ENCODE measurements at regions of chr10 and their contacts with region 1.

Region 1: GRCh38 chr10:102835007-102835482 is 2.2 kb downstream of the CYP17A1 start:
- DNase-seq: peak; percentile 56 to 84
- ATAC-seq: peak; percentile 89

Region 2: DNA sequence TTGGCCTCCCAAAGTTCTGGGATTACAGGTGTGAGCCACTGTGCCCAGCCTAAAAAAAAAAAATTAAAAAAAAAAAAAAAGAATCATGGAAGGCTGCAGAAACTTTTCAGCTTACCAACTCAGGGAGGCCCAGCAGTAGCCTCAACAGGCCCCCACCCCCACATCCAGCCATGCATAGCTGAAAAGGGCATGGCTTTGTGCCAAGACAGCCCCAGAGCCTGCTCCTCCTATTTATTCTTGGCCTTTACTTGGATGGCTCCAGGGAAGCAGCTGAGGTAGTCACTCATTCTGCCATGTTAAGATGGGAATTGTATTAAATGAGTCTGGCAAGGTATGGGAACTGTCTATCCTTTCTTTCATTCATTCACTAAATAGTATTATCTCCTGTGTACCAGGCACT is 69.3 kb after region 1 on chr10:
- intact Hi-C with region 1: loop called in 1 of 2 experiments (anchors 5 kb)
- DNase-seq: no peak
- ATAC-seq: no peak

Region 3: DNA sequence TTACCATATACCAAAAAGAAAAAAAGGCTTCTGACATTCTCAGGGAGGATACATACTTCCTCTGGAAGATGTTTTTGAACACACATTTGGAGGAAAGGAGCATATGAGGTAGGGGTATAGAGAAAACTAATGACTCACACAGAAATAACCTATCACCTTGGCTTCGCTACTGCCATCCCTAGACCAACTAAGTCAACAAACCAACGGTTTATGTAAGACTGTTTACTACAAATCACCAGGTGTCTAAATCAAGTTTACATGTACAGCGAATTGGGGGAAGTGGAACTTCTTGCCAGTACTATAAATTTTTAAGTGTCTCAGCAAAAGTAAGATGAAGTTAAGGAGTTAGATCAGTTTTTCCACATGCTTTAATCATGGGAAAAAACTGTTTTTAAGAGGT is 261.1 kb after region 1 on chr10:
- intact Hi-C with region 1: no loop called
- DNase-seq: no peak
- ATAC-seq: no peak

Region 4: GRCh38 chr10:103244663-103245271 is 409.7 kb after region 1 on chr10:
- intact Hi-C with region 1: loop called (anchors 10 kb)
- DNase-seq: peak; percentile 68 to 75
- ATAC-seq: peak; percentile 20